IMR-90 (cell line): ENCODE measurements at regions of chr6 and their contacts with region 1.

Region 1: DNA sequence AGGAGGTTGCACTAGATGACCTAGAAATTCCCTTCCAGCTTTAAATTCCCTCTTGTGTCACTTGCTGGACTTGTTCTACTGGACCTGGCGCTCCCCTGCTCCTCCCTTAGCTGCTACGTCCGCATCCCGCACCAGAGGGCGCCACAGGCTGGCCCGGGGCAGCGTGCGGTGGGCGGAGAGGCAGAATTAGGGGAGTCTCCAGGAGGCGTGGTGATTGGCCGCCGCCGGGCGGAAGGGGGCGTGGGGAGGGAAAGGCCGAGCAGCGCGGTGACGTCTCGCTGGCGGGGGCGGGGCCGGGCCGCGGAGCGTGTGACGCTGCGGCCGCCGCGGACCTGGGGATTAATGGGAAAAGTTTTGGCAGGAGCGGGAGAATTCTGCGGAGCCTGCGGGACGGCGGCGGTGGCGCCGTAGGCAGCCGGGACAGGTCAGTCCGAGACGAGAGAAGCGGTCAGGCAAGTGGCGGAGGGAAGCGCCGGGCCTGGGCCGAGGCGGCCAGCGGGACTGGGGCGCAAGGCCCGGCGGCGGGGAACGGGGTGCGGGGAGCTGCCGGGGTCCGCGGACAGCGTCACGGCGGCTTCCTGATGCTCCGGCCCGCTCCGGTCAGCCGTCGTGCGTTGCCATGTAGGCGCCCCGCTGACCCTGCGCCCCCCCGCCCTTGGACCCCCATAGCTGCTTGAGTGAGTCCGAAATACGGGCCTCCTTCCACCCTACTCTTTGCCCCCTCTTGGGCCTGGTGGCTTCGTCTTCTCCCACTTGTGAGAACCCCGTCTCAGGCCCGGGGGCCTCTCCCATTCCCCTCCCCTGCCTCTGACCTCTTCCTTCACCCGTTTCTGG is at the start of gene PPARD:
- DNase-seq: peak; percentile 92
- ATAC-seq: peak; percentile 98
- H3K4me3 ChIP-seq: peak within 1 kb of the TSS; percentile 64
- H3K27ac ChIP-seq: peak within 1 kb of the TSS; percentile 83
- H3K4me1 ChIP-seq: peaks cover 14% of the 10 kb centered on the region
- H3K27me3 ChIP-seq: peaks cover 5% of the 10 kb centered on the region
- CTCF ChIP-seq: peak; percentile 99
- POLR2A ChIP-seq: peak; percentile 93
- RAD21 ChIP-seq: peak; percentile 100
- total RNA-seq, gene PPARD: 10.0 and 10.4 TPM in 2 replicates

Region 2: GRCh38 chr6:34757687-34758274 is 584.7 kb before region 1 on chr6:
- CTCF ChIA-PET with region 1: no interaction called
- POLR2A ChIA-PET with region 1: no interaction called
- dilution Hi-C with region 1: no loop called
- in situ Hi-C with region 1: no loop called
- intact Hi-C with region 1: no loop called
- DNase-seq: no peak
- ATAC-seq: no peak
- H3K4me3 ChIP-seq: peak overlapping the region; percentile 71
- H3K27ac ChIP-seq: peak overlapping the region; percentile 84
- H3K4me1 ChIP-seq: no peaks in the 10 kb centered on the region
- H3K27me3 ChIP-seq: no peaks in the 10 kb centered on the region
- CTCF ChIP-seq: no peak
- POLR2A ChIP-seq: no peak; the same call in 1 of the 2 replicates
- RAD21 ChIP-seq: no peak

Region 3: DNA sequence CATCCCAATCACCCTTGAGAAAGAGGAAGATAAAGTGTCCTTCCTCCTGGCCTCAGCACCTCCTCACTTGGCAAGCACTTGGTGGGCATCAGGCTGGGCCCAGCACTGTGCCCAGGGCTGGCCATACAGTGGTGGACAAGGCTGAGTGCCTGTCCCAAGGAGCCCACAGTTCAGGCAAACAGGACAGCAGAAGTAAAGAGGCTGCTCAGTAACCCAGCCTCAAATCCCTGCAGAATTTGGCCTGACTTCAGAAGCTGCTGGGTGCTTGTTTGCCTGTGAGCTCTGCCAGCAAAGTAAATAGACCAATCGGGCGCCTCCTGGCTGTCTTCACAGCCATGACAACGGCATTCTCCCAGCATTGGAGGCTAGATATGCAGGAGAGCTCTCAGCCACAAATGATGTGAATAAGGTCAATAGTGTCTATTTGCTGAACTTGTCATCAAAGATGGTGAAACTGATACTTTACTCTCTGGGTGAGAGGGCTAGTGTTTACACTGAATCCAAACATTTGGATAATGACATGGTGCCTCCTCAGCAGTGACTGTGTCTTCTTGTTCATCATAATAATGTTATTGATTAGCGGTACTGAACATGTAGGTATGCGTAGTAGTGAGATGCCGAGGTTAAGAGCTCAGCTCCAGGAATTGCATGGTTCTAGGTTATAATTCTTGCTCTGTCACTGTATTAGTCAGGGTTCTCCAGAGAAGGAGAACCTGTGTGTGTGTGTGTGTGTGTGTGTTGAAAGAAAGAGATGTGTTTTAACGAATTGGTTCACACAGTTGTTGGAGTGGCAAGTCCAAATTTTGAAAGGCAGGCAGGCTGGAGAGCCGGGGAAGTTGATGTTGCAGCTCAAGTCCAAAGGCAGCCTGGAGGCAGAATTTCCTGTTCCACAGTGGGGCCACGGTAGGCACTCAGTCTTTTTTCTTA is 72.9 kb after region 1 on chr6:
- CTCF ChIA-PET with region 1: interaction called, 5 read pairs
- POLR2A ChIA-PET with region 1: interaction called, 4 read pairs
- dilution Hi-C with region 1: no loop called
- in situ Hi-C with region 1: no loop called
- intact Hi-C with region 1: loop called (anchors 1 kb)
- DNase-seq: peak; percentile 96
- ATAC-seq: peak; percentile 90
- H3K4me3 ChIP-seq: no peak overlapping the region
- H3K27ac ChIP-seq: peak overlapping the region; percentile 77
- H3K4me1 ChIP-seq: peaks cover 33% of the 10 kb centered on the region
- H3K27me3 ChIP-seq: no peaks in the 10 kb centered on the region
- CTCF ChIP-seq: peak; percentile 78
- POLR2A ChIP-seq: no peak
- RAD21 ChIP-seq: peak; percentile 73

Region 4: DNA sequence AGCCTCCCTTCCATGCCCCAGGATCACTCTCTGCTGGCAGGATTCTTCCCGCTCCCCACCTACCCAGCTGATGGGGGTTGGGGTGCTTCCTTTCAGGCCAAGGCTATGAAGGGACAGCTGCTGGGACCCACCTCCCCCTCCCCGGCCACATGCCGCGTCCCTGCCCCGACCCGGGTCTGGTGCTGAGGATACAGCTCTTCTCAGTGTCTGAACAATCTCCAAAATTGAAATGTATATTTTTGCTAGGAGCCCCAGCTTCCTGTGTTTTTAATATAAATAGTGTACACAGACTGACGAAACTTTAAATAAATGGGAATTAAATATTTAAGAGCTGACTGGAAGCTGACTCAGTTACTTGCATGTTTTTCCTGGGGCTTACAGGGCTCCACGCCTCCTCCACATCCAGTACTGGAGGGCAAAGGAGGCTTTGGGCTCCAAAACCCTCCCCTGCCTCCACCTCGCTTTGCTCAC is 85.4 kb after region 1 on chr6:
- CTCF ChIA-PET with region 1: no interaction called
- POLR2A ChIA-PET with region 1: interaction called, 10 read pairs
- dilution Hi-C with region 1: no loop called
- in situ Hi-C with region 1: no loop called
- intact Hi-C with region 1: no loop called
- DNase-seq: peak; percentile 92
- ATAC-seq: peak; percentile 84
- H3K4me3 ChIP-seq: no peak overlapping the region
- H3K27ac ChIP-seq: peak overlapping the region; percentile 98
- H3K4me1 ChIP-seq: peaks cover 42% of the 10 kb centered on the region
- H3K27me3 ChIP-seq: no peaks in the 10 kb centered on the region
- CTCF ChIP-seq: no peak
- POLR2A ChIP-seq: no peak
- RAD21 ChIP-seq: no peak

Region 5: DNA sequence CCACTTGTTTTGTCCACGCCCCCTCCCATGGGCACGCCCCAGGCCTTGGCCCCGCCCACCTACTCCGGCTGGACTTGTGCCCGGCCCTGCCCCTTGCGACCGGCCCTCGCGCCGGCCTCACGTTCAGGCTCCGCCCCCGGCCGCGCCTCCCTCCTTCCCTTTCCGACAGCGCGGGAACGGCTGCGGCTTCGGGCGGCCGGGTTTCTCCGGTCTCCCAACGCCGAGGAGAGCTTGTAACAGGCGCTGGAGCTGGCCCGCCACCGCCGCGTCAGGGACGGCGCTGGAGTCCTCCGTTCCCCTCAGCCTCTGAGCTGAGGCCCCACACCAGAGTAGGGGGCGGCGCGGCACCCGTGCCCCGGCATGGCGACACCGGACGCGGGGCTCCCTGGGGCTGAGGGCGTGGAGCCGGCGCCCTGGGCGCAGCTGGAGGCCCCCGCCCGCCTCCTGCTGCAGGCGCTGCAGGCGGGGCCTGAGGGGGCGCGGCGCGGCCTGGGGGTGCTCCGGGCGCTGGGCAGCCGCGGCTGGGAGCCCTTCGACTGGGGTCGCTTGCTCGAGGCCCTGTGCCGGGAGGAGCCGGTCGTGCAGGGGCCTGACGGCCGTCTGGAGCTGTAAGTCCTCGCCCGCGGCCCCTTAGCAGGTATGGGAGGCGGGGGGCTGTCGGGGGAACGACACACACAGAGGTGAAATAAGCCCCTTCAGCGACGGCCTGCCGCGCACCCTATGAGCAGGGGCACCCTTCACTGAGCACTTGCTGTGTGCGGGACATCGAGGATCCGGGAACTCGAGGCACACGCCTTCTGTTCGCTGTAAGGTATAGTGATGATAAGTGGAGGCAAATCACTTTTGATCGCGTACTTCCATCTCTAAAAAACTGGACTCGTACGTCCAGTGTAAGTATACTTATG is 110.0 kb after region 1 on chr6 and contains the start of gene FANCE:
- CTCF ChIA-PET with region 1: interaction called, 13 read pairs
- POLR2A ChIA-PET with region 1: interaction called, 3 read pairs
- dilution Hi-C with region 1: no loop called
- in situ Hi-C with region 1: loop called (anchors 5 kb)
- intact Hi-C with region 1: loop called (anchors 1 kb)
- DNase-seq: peak; percentile 86
- ATAC-seq: peak; percentile 96
- H3K4me3 ChIP-seq: peak within 1 kb of the TSS; percentile 87
- H3K27ac ChIP-seq: peak within 1 kb of the TSS; percentile 68
- H3K4me1 ChIP-seq: peaks cover 6% of the 10 kb centered on the region
- H3K27me3 ChIP-seq: no peaks in the 10 kb centered on the region
- CTCF ChIP-seq: no peak
- POLR2A ChIP-seq: no peak
- RAD21 ChIP-seq: no peak
- total RNA-seq, gene FANCE: 7.5 and 9.1 TPM in 2 replicates

Region 6: DNA sequence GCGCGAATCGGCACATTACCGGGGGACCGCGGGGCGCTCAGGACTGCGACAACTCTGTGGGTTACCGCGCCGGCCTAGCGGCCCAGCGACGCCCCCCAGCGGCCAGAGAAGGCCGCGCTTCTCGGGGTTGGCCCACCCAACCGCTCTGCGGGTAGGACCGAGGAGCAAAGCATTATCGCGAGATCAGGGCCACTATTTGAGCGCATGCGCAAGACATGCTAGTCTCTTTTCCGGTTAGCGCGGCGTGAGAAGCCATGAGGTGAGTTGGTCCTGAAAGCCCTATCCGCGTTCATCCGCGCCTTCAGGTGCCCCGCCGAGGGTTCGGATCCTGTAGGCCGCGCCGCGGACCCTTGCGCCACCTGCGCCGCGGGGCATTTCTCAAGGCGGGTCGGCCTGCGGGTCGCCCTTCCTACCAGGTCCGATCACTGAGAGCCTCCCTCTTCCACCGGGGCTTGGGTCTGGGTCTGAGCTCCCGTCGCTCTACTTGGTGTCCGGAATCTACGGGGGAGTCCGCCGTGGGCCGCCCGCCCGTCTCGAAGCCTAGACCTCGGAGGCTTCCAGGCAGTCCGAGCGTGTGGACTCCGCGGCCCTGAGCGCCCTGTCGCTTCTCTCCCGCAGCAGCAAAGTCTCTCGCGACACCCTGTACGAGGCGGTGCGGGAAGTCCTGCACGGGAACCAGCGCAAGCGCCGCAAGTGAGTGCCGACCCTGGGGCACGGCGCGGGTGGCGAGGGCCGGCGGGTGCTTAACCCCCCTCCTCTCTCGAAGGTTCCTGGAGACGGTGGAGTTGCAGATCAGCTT is 125.9 kb after region 1 on chr6 and contains the start of gene RPL10A:
- CTCF ChIA-PET with region 1: interaction called, 3 read pairs
- POLR2A ChIA-PET with region 1: interaction called, 5 read pairs
- dilution Hi-C with region 1: no loop called
- in situ Hi-C with region 1: no loop called
- intact Hi-C with region 1: loop called (anchors 1 kb)
- DNase-seq: peak; percentile 96
- ATAC-seq: peak; percentile 88
- H3K4me3 ChIP-seq: peak within 1 kb of the TSS; percentile 71
- H3K27ac ChIP-seq: peak within 1 kb of the TSS; percentile 79
- H3K4me1 ChIP-seq: peaks cover 10% of the 10 kb centered on the region
- H3K27me3 ChIP-seq: no peaks in the 10 kb centered on the region
- CTCF ChIP-seq: peak; percentile 99
- POLR2A ChIP-seq: peak; percentile 99
- RAD21 ChIP-seq: peak; percentile 89
- total RNA-seq, gene RPL10A: 1,746 and 2,310 TPM in 2 replicates